Heart right ventricle (tissue), 16 donors: ENCODE measurements at regions of chr14 and their contacts with region 1.

Region 1: GRCh38 chr14:50667996-50668825 is at the start of gene SAV1:
- DNase-seq: peak; percentile 88 to 89
- ATAC-seq: peak; percentile 92 to 97 (median 94)
- H3K4me3 ChIP-seq: peak within 1 kb of the TSS; percentile 36 to 98 (median 90)
- H3K27ac ChIP-seq: peak within 1 kb of the TSS; percentile 91 to 99 (median 96)
- H3K4me1 ChIP-seq: peaks cover 0 to 47% (median 30%) of the 10 kb centered on the region in 9 donors
- H3K27me3 ChIP-seq: no peaks in the 10 kb centered on the region
- CTCF ChIP-seq: no peak
- total RNA-seq, gene SAV1: 26.9 to 32.6 (median 30.1) TPM

Region 2: DNA sequence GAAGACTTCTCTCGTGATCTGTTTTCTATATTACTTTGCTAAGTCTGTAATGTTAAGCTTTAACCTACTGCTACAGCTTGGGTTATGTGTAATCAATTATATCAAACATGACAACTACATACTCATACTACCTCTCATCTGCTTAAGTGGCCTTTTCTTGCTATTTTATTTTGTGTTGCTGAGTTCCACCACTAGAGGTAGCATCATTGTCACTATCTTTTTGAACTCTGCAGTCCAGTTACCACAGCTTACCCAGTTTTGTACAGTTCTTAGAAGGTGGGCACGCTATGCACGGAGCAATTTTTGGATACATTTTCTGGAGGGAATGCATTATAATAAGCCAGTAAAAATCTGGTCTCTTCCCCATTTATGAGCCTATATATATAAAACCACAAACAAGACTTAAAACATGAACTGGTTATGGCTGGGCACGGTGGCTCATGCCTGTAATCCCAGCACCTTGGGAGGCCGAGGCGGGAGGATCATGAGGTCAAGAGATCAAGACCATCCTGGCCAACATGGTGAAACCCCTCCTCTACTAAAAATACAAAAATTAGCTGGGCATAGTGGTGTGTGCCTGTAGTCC is 48.6 kb before region 1 on chr14:
- intact Hi-C with region 1: loop called in 1 of 10 experiments (anchors 5 kb)
- DNase-seq: no peak
- ATAC-seq: peak in 4 of 8 donors; percentile 24 to 58 (median 48)
- H3K4me3 ChIP-seq: no peak overlapping the region
- H3K27ac ChIP-seq: no peak overlapping the region
- H3K4me1 ChIP-seq: peaks cover 0 to 8% (median 0%) of the 10 kb centered on the region in 9 donors
- H3K27me3 ChIP-seq: no peaks in the 10 kb centered on the region
- CTCF ChIP-seq: peak; percentile 32 to 72 (median 63)

Region 3: DNA sequence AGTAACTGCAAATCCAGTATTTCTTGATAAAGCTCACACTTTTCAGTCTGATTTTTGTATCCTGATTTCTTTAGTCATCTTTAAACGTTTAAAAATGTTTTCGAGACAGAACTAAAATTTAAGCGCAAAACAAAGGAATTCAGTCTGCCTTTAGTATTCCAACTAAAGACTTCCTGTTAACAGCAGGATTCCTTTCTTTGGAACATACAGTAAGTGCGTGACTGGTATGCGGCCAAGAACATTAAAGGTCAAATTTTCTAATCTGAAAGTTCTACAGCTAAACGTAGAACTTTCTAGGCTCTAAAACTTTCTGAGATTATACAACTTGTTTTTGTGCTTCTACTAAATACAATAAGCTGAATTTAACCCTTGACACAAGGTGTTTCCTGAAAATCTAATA is 10.0 kb before region 1 on chr14:
- intact Hi-C with region 1: loop called in 1 of 10 experiments (anchors 1 kb)
- DNase-seq: peak in 1 of 2 donors; percentile 24
- ATAC-seq: peak in 6 of 8 donors; percentile 56 to 82 (median 74)
- H3K4me3 ChIP-seq: peak overlapping the region in 4 of 10 donors; percentile 5 to 24 (median 21)
- H3K27ac ChIP-seq: peak overlapping the region; percentile 8 to 82 (median 60)
- H3K4me1 ChIP-seq: peaks cover 2 to 85% (median 46%) of the 10 kb centered on the region in 9 donors
- H3K27me3 ChIP-seq: no peaks in the 10 kb centered on the region
- CTCF ChIP-seq: no peak